H1 (cell line): ENCODE measurements at regions of chr7 and their contacts with region 1.

Region 1: DNA sequence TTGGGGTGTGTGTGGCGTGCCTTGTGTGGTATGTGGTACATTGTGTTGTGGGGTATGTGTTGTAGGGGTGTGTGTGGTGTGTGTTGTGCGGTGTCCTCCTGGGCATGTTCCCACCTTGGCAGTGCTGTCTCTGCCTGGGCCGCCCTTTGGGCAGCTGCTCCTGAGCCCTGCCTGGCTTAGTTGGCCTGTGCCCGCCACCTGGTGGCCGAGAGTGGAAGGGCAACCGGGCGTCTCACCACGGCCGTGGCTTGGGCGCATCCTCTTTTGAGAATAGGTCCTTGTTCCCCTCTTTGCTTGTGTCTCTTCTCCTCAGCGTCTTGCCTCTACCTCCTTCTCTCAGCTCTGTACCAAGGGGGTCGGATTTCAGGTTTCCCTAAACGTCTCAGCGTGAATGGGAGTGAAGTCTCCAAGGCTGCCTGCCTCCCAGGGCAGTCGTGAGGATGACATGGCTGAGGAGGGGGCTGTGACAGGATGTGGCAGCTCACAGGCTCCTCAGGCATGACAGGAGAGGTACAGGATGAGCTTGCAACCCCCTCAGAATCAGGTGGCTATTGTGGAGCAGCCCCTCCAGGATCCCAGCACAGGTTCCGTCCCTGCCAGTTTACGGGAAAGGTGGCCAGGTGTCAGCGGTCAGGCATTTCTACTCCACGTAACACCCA is 98.4 kb upstream of the PODXL start:
- DNase-seq: peak; percentile 70 to 100
- H3K4me3 ChIP-seq: peak overlapping the region in 1 of 4 experiments; percentile 9; a peak in 1 of 8 replicates
- H3K27ac ChIP-seq: no peak overlapping the region
- H3K4me1 ChIP-seq: peaks cover 7 to 30% (median 13%) of the 10 kb centered on the region in 4 experiments
- H3K27me3 ChIP-seq: no peaks in the 10 kb centered on the region
- CTCF ChIP-seq: peak; percentile 98 to 99 (median 98)
- EP300 ChIP-seq: no peak
- POLR2A ChIP-seq: no peak
- RAD21 ChIP-seq: peak; percentile 97 to 98

Region 2: DNA sequence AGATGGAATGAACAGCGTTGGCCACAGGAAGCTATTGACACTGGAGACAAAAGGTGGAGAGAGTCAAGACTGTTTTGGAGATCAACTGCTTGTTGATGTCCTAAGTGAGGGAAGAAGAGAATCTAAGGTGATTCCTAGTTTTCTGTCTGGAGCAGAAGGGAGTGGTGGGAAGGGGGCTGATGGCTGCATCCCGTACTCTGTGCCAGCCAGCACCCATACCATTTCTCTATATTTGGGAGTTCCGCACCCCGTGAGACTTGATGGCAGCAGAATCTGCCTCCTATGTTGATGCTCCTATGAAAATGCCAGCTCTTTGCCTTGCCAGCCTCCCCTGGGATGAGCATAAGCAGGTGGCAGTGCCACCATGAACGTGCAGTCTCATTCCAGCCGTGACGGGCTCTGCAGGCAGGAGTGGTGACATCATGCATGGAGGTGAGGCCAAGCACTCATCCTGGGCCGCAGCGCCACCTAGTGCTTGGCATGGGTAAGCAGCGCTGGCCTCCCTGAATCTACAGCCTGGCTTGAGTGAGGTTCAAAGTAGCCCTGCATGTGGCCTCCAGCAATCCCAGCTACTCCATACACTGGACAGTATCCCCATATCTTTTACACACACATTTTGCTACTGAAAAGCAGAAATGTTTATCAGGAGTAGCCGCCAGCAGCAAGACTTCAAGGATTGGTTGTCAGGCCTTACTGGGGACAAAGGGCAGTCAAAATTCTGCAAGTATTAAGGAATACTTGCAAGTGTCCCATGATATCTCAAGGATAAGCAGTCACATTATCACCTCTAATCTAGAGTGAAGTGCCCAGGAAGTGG is 141.3 kb before region 1 on chr7:
- CTCF ChIA-PET with region 1: interaction called, 40 read pairs
- POLR2A ChIA-PET with region 1: interaction called, 6 read pairs
- DNase-seq: peak; percentile 74 to 94
- H3K4me3 ChIP-seq: no peak overlapping the region
- H3K27ac ChIP-seq: peak overlapping the region; percentile 25; the same call in 1 of the 2 replicates
- H3K4me1 ChIP-seq: peaks cover 0 to 8% (median 3%) of the 10 kb centered on the region in 4 experiments; a peak in 5 of 7 replicates
- H3K27me3 ChIP-seq: no peaks in the 10 kb centered on the region
- CTCF ChIP-seq: peak; percentile 83 to 100 (median 99)
- EP300 ChIP-seq: no peak
- POLR2A ChIP-seq: peak in 1 of 2 experiments; percentile 61; a peak in 1 of 3 replicates
- RAD21 ChIP-seq: peak; percentile 68 to 73

Region 3: DNA sequence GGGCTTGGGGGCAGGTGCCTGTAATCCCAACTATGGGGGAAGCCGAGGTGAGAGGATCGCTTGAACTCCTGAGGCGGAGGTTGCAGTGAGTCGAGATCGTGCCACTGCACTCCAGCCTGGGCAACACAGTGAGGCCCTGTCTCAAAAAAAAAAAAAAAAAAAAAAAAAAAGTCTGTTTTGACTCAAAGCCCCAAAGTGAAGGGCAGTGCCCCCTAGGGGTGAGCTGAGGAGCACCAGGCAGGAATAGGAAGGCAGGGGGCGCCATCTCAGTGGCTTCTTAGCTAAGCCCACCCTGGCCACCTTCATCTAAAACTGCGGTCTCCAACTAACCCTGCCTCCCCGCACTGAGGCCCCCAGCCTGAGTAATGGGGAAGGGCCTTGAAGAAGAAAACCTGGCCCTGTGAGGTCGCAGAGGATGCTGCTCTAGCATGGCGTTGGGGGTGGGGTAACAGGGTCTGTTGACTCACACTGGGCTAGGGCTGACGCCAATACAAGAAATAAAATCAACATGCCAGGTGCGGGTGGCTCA is 108.2 kb before region 1 on chr7:
- CTCF ChIA-PET with region 1: interaction called, 164 read pairs
- POLR2A ChIA-PET with region 1: interaction called, 9 read pairs
- DNase-seq: peak; percentile 89 to 92
- H3K4me3 ChIP-seq: no peak overlapping the region
- H3K27ac ChIP-seq: no peak overlapping the region
- H3K4me1 ChIP-seq: peaks cover 39 to 86% (median 55%) of the 10 kb centered on the region in 4 experiments
- H3K27me3 ChIP-seq: no peaks in the 10 kb centered on the region
- CTCF ChIP-seq: peak; percentile 98 to 99 (median 98)
- EP300 ChIP-seq: no peak
- POLR2A ChIP-seq: no peak; a peak in 1 of 3 replicates
- RAD21 ChIP-seq: peak; percentile 73 to 79

Region 4: DNA sequence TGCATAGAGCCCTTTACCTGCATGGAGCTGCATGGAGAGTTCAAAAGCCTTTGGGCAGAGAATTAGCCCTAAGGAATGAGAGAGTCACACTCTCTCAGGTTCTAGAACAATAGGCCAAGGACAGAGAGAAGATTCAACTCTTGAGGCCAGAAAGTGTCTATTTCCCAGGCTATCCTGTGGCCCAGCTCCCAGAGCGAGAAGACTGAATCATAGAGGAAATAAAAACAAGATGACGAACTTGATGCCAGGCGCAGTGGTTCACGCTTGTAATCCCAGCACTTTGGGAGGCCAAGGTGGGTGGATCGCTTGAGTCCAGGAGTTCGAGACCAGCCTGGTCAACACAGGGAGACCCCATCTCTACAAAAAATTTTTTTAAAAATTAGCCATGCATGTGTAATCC is 80.1 kb before region 1 on chr7:
- CTCF ChIA-PET with region 1: interaction called, 25 read pairs
- POLR2A ChIA-PET with region 1: no interaction called
- DNase-seq: no peak
- H3K4me3 ChIP-seq: no peak overlapping the region
- H3K27ac ChIP-seq: no peak overlapping the region
- H3K4me1 ChIP-seq: peaks cover 0 to 2% (median under 1%) of the 10 kb centered on the region in 4 experiments; a peak in 2 of 7 replicates
- H3K27me3 ChIP-seq: no peaks in the 10 kb centered on the region; a peak in 1 of 7 replicates
- CTCF ChIP-seq: no peak
- EP300 ChIP-seq: no peak
- POLR2A ChIP-seq: no peak
- RAD21 ChIP-seq: no peak

Region 5: DNA sequence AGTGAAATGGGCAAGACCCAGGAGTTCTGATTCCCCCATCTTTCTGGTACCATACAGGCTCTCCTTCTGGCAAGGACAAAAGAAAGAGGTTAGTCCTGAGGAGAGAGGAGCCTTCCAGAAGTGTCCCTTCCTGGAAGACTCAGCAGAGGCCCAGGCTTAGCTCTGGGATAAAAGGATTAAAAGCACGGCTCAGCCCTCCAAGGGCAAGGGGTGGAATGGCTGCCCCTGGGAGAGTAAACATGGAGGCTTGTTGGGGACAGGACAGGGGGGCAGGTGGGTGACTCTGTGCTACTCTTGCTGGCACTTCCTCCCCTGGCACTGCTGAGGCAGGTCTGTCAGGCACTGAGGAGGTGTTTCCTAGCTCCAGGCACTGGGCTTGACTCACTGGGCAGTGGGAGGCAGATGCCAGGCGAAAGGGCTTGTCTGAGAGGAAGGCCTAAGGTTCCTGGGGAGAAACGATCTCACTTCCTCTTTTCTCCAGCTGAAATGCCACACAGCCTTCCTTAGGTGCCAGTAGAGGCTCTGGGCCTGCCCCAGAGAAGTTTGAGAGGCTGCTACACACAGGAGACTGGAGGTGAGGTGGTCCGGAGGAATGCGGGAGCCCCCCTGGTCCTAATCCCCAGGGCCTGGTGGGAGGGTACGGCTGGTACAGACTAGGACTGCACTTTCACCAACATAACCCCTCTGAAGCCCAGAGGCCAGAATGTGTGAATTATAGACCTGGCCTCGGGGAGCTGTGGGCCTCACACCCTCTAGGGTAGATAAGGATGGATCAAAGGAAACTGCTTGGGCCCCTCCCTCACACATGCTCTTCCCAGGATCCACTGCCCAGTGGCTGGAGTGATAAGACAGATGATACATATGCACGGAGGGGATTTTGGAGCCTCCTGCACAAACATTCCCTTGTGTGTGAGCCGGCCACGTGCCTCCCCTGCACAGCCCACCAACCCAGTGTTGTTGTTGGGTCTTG is 35.2 kb before region 1 on chr7:
- CTCF ChIA-PET with region 1: interaction called, 53 read pairs
- POLR2A ChIA-PET with region 1: interaction called, 10 read pairs
- DNase-seq: no peak
- H3K4me3 ChIP-seq: no peak overlapping the region
- H3K27ac ChIP-seq: peak overlapping the region; percentile 25; the same call in 1 of the 2 replicates
- H3K4me1 ChIP-seq: peaks cover 4 to 24% (median 12%) of the 10 kb centered on the region in 4 experiments
- H3K27me3 ChIP-seq: no peaks in the 10 kb centered on the region
- CTCF ChIP-seq: no peak
- EP300 ChIP-seq: no peak
- POLR2A ChIP-seq: no peak
- RAD21 ChIP-seq: no peak